ENCODE measurements at regions of chr1 and their contacts with region 1.

Region 1: GRCh38 chr1:84772428-84772943 is 82.2 kb upstream of the SSX2IP start:
- DNase-seq: peak; percentile 78
- H3K4me3 ChIP-seq: no peak overlapping the region
- H3K27ac ChIP-seq: peak overlapping the region; percentile 20
- H3K4me1 ChIP-seq: peaks cover 17% of the 10 kb centered on the region
- H3K27me3 ChIP-seq: no peaks in the 10 kb centered on the region
- CTCF ChIP-seq: peak; percentile 91 to 95

Region 2: GRCh38 chr1:84143796-84144565 is 628.5 kb before region 1 on chr1 and contains the start of gene PRKACB:
- CTCF ChIA-PET with region 1: no interaction called
- dilution Hi-C with region 1: no loop called
- in situ Hi-C with region 1: loop called in 1 of 2 experiments (anchors 25 kb)
- intact Hi-C with region 1: loop called (anchors 5 kb)
- DNase-seq: peak; percentile 27
- H3K4me3 ChIP-seq: no peak within 1 kb of the TSS
- H3K27ac ChIP-seq: no peak within 1 kb of the TSS
- H3K4me1 ChIP-seq: peaks cover 17% of the 10 kb centered on the region
- H3K27me3 ChIP-seq: no peaks in the 10 kb centered on the region
- CTCF ChIP-seq: no peak
- total RNA-seq, gene PRKACB: 25.3 to 29.0 TPM

Region 3: GRCh38 chr1:84377480-84378095 is 394.9 kb before region 1 on chr1:
- CTCF ChIA-PET with region 1: no interaction called
- dilution Hi-C with region 1: no loop called
- in situ Hi-C with region 1: no loop called
- intact Hi-C with region 1: no loop called
- DNase-seq: peak; percentile 34
- H3K4me3 ChIP-seq: no peak overlapping the region
- H3K27ac ChIP-seq: no peak overlapping the region
- H3K4me1 ChIP-seq: peaks cover 11% of the 10 kb centered on the region
- H3K27me3 ChIP-seq: no peaks in the 10 kb centered on the region
- CTCF ChIP-seq: no peak

Region 4: GRCh38 chr1:84442256-84442655 is 330.2 kb before region 1 on chr1:
- CTCF ChIA-PET with region 1: no interaction called
- dilution Hi-C with region 1: loop called (anchors 25 kb)
- in situ Hi-C with region 1: loop called (anchors 10 to 25 kb)
- intact Hi-C with region 1: loop called (anchors 1 kb)
- DNase-seq: peak; percentile 83
- H3K4me3 ChIP-seq: no peak overlapping the region
- H3K27ac ChIP-seq: no peak overlapping the region
- H3K4me1 ChIP-seq: peaks cover 8% of the 10 kb centered on the region
- H3K27me3 ChIP-seq: no peaks in the 10 kb centered on the region
- CTCF ChIP-seq: peak; percentile 53 to 60

Region 5: GRCh38 chr1:84847253-84848250 is 75.1 kb after region 1 on chr1:
- CTCF ChIA-PET with region 1: no interaction called
- dilution Hi-C with region 1: no loop called
- in situ Hi-C with region 1: no loop called
- intact Hi-C with region 1: loop called (anchors 2 kb)
- DNase-seq: peak; percentile 98
- H3K4me3 ChIP-seq: no peak overlapping the region
- H3K27ac ChIP-seq: peak overlapping the region; percentile 93
- H3K4me1 ChIP-seq: peaks cover 58% of the 10 kb centered on the region
- H3K27me3 ChIP-seq: no peaks in the 10 kb centered on the region
- CTCF ChIP-seq: no peak

Region 6: GRCh38 chr1:84887261-84887934 is 114.9 kb after region 1 on chr1:
- CTCF ChIA-PET with region 1: no interaction called
- dilution Hi-C with region 1: no loop called
- in situ Hi-C with region 1: no loop called
- intact Hi-C with region 1: loop called (anchors 1 kb)
- DNase-seq: peak; percentile 94
- H3K4me3 ChIP-seq: peak overlapping the region in 1 of 3 experiments; percentile 3
- H3K27ac ChIP-seq: peak overlapping the region; percentile 92
- H3K4me1 ChIP-seq: peaks cover 45% of the 10 kb centered on the region
- H3K27me3 ChIP-seq: no peaks in the 10 kb centered on the region
- CTCF ChIP-seq: no peak

Measured in mammary epithelial cell (primary cell).